ENCODE measurements at regions of chr18 and their contacts with region 1.

Region 1: GRCh38 chr18:12838178-12838634 is 45.8 kb downstream of the PTPN2 start:
- DNase-seq: peak; percentile 73 to 82 (median 80)
- ATAC-seq: peak; percentile 95
- H3K4me3 ChIP-seq: no peak overlapping the region
- H3K4me1 ChIP-seq: peaks cover 16% of the 10 kb centered on the region
- CTCF ChIP-seq: no peak

Region 2: GRCh38 chr18:12497291-12497690 is 340.9 kb before region 1 on chr18:
- intact Hi-C with region 1: no loop called
- DNase-seq: no peak
- ATAC-seq: no peak
- H3K4me3 ChIP-seq: no peak overlapping the region
- H3K4me1 ChIP-seq: no peaks in the 10 kb centered on the region
- CTCF ChIP-seq: no peak

Region 3: GRCh38 chr18:12768625-12769024 is 69.6 kb before region 1 on chr18:
- intact Hi-C with region 1: no loop called
- DNase-seq: no peak
- ATAC-seq: no peak
- H3K4me3 ChIP-seq: no peak overlapping the region
- H3K4me1 ChIP-seq: no peaks in the 10 kb centered on the region
- CTCF ChIP-seq: no peak

Region 4: GRCh38 chr18:12883684-12884405 is 45.6 kb after region 1 on chr18 and contains the start of gene PTPN2:
- intact Hi-C with region 1: loop called in 1 of 2 experiments (anchors 10 kb)
- DNase-seq: peak; percentile 94 to 97 (median 94)
- ATAC-seq: peak; percentile 95
- H3K4me3 ChIP-seq: peak within 1 kb of the TSS; percentile 59
- H3K4me1 ChIP-seq: peaks cover 12% of the 10 kb centered on the region
- CTCF ChIP-seq: no peak
- total RNA-seq, gene PTPN2: 28.9 to 42.0 (median 38.4) TPM

Measured in mucosa of descending colon (tissue), 3 donors.